Cardiac septum (tissue), 1 donor: ENCODE measurements at regions of chr11 and their contacts with region 1.

Region 1: DNA sequence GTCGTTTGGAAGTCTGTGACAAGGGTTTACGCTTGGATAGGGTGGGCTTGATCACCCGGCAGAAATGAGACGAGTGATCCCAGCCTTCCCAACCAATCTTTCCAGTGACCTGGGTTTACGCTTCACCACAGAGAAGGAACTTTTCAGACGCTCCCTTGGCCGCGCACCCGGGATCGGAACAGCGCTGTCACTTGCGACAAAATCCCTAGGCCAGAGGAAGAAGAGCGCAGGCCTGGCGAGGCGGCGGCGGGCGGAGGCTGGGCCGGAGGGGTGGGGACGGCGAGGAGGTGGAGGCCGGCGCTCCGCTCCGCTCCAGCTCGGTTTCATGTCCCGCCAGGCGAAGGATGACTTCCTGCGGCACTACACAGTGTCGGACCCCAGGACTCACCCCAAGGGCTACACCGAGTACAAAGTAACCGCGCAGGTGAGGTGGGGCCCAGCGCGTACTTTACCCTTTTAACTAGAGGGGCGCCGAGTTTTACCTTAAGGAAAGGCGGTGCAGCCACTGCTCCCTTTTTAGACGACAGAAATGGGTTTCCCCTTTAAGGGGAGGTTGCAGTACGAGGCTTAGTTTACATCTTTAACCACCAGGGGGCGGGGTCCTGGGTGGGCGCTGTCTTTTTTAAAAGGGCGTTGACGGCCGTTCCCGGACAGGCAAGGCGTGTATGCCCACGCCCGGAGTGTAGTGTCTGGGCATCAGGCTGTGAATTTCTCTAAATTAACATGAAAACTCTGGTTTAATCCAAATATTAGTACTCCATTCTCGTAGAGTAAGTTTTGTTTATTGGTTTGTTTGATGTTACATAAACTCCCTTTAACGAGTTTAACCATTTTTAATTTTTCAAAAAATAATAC is at the start of gene SNX15:
- DNase-seq: peak; percentile 96
- total RNA-seq, gene SNX15: 17.0 TPM

Region 2: GRCh38 chr11:64317957-64318693 is 709.3 kb before region 1 on chr11 and contains the start of gene PRDX5:
- intact Hi-C with region 1: no loop called
- DNase-seq: peak; percentile 99
- total RNA-seq, gene PRDX5: 208 TPM

Region 3: DNA sequence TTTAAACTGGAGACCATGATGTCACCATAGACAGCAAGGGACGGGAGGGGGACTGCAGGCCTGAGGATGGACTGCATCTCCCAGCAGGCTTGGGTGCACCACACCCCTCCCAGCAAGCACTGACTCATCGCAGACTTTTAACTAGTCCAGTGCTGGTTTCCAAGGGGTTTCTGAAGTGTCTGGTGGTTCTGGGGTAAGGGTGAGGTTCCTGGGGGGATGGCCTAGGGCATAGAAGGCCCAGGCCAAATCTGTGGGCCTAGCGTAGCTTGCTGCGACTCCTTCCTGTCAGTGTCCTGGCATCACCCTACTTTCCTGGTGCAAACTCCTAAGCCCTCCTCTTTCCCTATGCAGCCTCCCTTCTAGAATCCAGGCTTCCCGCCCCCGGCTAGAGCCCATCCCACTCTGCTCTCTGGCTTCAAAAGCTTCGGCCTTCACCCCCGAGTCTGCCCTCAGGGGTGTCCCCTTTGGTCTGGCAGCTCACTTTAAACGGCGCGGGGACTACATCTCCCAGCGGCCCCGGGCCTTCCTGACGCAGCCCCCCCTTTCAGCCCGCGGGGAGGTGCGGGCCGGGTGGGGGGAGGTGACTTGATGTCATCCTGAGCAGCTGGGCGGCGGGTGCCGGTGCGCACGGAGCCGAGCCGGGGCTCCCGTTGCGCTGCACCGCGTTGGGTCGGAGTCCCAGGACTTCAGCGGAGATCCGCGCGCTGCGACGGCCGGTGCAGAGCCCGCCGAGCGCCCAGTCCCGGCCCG is 103.2 kb before region 1 on chr11 and contains the start of gene PPP2R5B:
- intact Hi-C with region 1: loop called (anchors 1 kb)
- DNase-seq: peak; percentile 96
- total RNA-seq, gene PPP2R5B: 24.9 TPM